ENCODE measurements at regions of chr19 and their contacts with region 1.

Region 1: GRCh38 chr19:45792470-45793177 is at the start of gene DMWD:
- DNase-seq: peak; percentile 100
- ATAC-seq: peak; percentile 90
- H3K4me3 Mint-ChIP-seq: peak within 1 kb of the TSS; percentile 82
- H3K27ac Mint-ChIP-seq: peak within 1 kb of the TSS; percentile 79
- H3K4me1 Mint-ChIP-seq: peaks cover 26% of the 10 kb centered on the region
- H3K27me3 Mint-ChIP-seq: peaks cover 40% of the 10 kb centered on the region
- total RNA-seq, gene DMWD: 47.0 to 47.9 TPM

Region 2: DNA sequence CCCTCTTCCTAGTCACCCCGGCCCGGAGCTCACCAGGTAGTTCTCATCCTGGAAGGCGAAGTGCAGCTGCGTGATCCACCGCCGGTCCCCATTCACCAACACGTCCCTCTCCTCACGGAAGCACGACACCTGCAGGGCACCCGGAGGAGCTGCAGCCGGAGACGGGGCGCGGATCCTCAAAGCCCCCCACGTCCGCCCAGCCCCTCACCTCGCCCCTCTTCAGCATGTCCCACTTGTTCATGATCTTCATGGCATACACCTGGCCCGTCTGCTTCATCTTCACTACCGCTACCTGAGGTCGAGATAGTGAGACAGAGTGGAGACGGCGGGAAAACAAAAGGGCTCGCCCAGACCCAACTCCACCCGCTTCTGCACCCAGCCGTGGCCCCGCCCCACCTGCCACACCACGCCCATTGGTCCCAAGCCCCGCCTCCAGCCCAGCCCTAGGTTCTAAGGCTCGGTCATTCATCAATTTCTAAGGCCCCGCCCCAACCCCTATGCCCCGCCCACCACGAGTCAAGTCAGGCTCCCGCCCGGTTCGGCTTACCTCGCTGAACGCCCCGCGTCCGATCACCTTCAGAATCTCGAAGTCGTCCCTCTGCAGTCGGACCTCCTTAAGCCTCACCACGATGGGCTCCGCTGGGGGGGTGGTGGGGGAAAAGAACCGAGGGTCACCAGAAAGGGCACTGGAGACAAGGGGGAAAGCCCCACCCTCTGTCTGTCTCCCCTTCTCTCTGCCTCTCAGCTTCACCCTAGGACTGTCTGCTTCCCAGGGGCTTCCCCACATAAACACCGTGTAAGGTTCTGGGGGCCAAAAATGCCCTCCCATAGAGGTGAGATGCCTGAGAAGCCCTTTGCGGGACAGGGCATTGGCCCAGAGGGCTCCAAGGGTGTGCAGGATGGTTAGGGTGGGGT is 13.1 kb before region 1 on chr19:
- CTCF ChIA-PET with region 1: interaction called, 338 read pairs
- DNase-seq: peak; percentile 96
- ATAC-seq: peak; percentile 97
- H3K4me3 Mint-ChIP-seq: peak overlapping the region; percentile 64
- H3K27ac Mint-ChIP-seq: no peak overlapping the region
- H3K4me1 Mint-ChIP-seq: peaks cover 13% of the 10 kb centered on the region
- H3K27me3 Mint-ChIP-seq: peaks cover 10% of the 10 kb centered on the region